Tibial artery (tissue), 4 donors: ENCODE measurements at regions of chr6 and their contacts with region 1.

Region 1: DNA sequence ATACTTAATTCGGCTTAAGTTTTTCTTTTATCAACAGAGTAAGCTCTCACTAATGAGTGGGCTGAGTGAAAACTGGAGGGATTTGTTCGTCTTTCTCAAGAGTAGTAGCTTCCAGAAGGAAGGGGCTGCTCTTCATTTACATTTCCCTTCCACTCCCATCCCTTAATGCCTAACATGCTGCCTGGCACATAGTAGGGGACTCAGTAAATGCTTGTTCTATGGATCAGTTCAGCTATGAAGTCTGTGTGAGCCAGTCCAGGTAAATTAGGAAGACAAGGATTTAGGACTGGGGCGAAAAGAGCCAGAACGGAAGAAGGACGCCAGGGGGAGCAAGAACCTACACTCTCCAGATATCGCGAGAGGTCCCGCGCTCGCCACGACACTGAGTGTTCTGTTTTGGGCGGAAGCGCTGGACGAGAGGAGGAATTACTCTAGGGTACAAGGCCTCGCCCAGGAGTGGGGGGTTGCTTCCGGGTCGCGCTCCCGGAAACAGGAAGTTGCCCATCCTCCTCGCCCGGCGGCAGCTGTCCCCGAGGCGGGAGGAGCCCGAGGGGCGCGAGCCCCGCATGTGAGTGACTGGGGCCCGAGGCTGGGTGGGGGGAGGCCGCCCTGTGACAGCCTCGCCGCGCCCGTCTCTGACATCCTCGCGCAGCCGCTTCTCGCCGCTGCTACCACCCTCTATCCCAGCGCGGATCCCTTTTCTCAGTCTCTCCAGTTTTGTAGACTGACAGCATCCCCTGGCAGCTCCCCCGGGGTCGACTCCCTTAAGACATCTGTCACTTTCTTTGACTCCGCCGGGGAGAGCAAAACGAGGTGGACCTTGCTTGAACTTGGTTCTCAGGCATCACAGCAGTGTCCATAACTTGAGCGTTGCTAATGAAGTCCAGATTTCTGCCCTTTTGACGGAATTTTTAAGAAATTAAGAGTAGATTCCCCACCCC is at the start of gene C6orf89:
- DNase-seq: peak; percentile 98 to 99
- H3K4me3 ChIP-seq: peak within 1 kb of the TSS; percentile 75 to 77
- H3K27ac ChIP-seq: peak within 1 kb of the TSS; percentile 86 to 89
- H3K4me1 ChIP-seq: peaks cover 0 to 25% (median 17%) of the 10 kb centered on the region in 4 donors
- H3K27me3 ChIP-seq: no peaks in the 10 kb centered on the region
- CTCF ChIP-seq: peak; percentile 86 to 95

Region 2: GRCh38 chr6:36984581-36985416 is 99.1 kb after region 1 on chr6:
- intact Hi-C with region 1: loop called (anchors 5 kb)
- DNase-seq: peak; percentile 61 to 77
- H3K4me3 ChIP-seq: peak overlapping the region; percentile 93 to 100
- H3K27ac ChIP-seq: peak overlapping the region; percentile 90 to 99
- H3K4me1 ChIP-seq: peaks cover 0 to 59% (median 49%) of the 10 kb centered on the region in 4 donors
- H3K27me3 ChIP-seq: no peaks in the 10 kb centered on the region
- CTCF ChIP-seq: no peak